Activated naive CD4-positive, alpha-beta T cell treated with anti-CD3 and anti-CD28 coated beads for 36 hours (primary cell): ENCODE measurements at regions of chr15 and their contacts with region 1.

Region 1: GRCh38 chr15:60585743-60586708 is 107.1 kb upstream of the ICE2 start:
- DNase-seq: peak; percentile 78
- H3K4me3 Mint-ChIP-seq: peak overlapping the region; percentile 30
- H3K27ac Mint-ChIP-seq: peak overlapping the region; percentile 69
- H3K4me1 Mint-ChIP-seq: peaks cover 77% of the 10 kb centered on the region
- H3K27me3 Mint-ChIP-seq: no peaks in the 10 kb centered on the region

Region 2: GRCh38 chr15:60478566-60479360 is 107.3 kb before region 1 on chr15 and contains the start of gene ICE2:
- CTCF ChIA-PET with region 1: no interaction called
- intact Hi-C with region 1: no loop called
- DNase-seq: peak; percentile 98
- H3K4me3 Mint-ChIP-seq: peak within 1 kb of the TSS; percentile 93
- H3K27ac Mint-ChIP-seq: peak within 1 kb of the TSS; percentile 94
- H3K4me1 Mint-ChIP-seq: peaks cover 44% of the 10 kb centered on the region
- H3K27me3 Mint-ChIP-seq: no peaks in the 10 kb centered on the region
- total RNA-seq, gene ICE2: 75.2 to 76.7 TPM

Region 3: DNA sequence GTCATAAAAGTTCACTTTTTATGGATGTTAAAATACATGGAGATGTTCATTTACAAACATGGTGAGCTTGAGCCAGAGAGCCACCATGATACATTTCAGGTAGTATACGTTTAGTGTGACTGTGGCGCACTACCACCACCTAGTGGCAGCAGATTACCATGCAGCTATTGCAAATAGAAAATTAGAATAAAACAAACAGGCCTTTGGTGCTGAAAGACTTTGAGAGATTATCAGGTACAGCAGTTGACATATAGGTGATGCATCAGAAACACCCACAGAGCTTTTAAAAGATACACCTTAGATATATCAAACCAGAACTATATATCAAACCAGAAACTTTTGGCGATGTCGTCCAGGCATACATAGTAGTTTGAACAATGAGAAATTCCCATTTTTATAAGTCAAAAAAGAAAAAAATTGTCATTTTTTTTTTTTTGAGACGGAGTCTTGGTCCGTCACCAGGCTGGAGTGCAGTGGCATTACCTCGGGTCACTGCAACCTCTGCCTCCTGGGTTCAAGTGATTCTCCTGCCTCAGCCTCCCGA is 65.1 kb before region 1 on chr15:
- CTCF ChIA-PET with region 1: interaction called, 16 read pairs
- intact Hi-C with region 1: no loop called
- DNase-seq: peak; percentile 91
- H3K4me3 Mint-ChIP-seq: no peak overlapping the region
- H3K27ac Mint-ChIP-seq: peak overlapping the region; percentile 42
- H3K4me1 Mint-ChIP-seq: peaks cover 42% of the 10 kb centered on the region
- H3K27me3 Mint-ChIP-seq: no peaks in the 10 kb centered on the region

Region 4: GRCh38 chr15:60573936-60574335 is 12.1 kb before region 1 on chr15:
- CTCF ChIA-PET with region 1: interaction called, 21 read pairs
- intact Hi-C with region 1: loop called (anchors 1 kb)
- DNase-seq: peak; percentile 64
- H3K4me3 Mint-ChIP-seq: peak overlapping the region; percentile 41
- H3K27ac Mint-ChIP-seq: peak overlapping the region; percentile 60
- H3K4me1 Mint-ChIP-seq: peaks cover 89% of the 10 kb centered on the region
- H3K27me3 Mint-ChIP-seq: no peaks in the 10 kb centered on the region

Region 5: GRCh38 chr15:60798821-60799220 is 212.8 kb after region 1 on chr15:
- CTCF ChIA-PET with region 1: interaction called, 4 read pairs
- intact Hi-C with region 1: loop called (anchors 2 kb)
- DNase-seq: peak; percentile 87
- H3K4me3 Mint-ChIP-seq: peak overlapping the region; percentile 34
- H3K27ac Mint-ChIP-seq: peak overlapping the region; percentile 98
- H3K4me1 Mint-ChIP-seq: peaks cover 83% of the 10 kb centered on the region
- H3K27me3 Mint-ChIP-seq: no peaks in the 10 kb centered on the region

Region 6: GRCh38 chr15:60899322-60899966 is 313.4 kb after region 1 on chr15:
- CTCF ChIA-PET with region 1: interaction called, 6 read pairs
- intact Hi-C with region 1: loop called (anchors 1 kb)
- DNase-seq: peak; percentile 60
- H3K4me3 Mint-ChIP-seq: no peak overlapping the region
- H3K27ac Mint-ChIP-seq: peak overlapping the region; percentile 74
- H3K4me1 Mint-ChIP-seq: peaks cover 63% of the 10 kb centered on the region
- H3K27me3 Mint-ChIP-seq: no peaks in the 10 kb centered on the region

Region 7: DNA sequence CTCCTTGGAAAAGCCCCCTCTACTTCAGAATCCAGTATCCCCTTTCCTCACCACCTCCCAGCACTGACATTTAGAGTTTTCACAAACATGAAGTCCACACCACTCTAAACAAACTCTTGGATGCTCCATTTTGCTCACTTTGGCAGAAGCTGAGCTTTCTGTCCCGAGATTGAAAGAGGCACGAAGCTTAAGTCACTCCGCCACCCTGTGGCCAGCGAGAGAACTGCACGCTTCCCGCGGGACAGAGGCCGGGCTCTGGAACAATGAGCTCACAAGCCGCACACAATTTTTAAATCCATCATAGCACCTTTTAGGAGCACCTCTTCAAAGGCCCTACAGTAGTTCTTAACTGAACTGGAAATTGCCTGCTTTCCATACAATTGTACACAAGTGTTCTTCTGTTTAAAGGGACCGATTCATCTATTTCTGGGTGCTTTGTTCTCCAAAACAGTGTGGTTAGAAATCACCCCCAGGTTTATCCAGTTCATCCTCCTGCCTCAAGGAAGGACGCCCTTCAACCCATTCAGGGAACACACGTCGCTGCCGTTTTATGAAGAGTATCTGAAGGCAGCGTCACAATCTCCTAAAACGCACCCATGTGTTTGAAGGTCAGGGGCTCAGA is 1248.2 kb after region 1 on chr15:
- CTCF ChIA-PET with region 1: no interaction called
- intact Hi-C with region 1: loop called (anchors 2 kb)
- DNase-seq: peak; percentile 83
- H3K4me3 Mint-ChIP-seq: no peak overlapping the region
- H3K27ac Mint-ChIP-seq: no peak overlapping the region
- H3K4me1 Mint-ChIP-seq: no peaks in the 10 kb centered on the region
- H3K27me3 Mint-ChIP-seq: peaks cover 18% of the 10 kb centered on the region